ENCODE measurements at regions of chr11 and their contacts with region 1.

Region 1: DNA sequence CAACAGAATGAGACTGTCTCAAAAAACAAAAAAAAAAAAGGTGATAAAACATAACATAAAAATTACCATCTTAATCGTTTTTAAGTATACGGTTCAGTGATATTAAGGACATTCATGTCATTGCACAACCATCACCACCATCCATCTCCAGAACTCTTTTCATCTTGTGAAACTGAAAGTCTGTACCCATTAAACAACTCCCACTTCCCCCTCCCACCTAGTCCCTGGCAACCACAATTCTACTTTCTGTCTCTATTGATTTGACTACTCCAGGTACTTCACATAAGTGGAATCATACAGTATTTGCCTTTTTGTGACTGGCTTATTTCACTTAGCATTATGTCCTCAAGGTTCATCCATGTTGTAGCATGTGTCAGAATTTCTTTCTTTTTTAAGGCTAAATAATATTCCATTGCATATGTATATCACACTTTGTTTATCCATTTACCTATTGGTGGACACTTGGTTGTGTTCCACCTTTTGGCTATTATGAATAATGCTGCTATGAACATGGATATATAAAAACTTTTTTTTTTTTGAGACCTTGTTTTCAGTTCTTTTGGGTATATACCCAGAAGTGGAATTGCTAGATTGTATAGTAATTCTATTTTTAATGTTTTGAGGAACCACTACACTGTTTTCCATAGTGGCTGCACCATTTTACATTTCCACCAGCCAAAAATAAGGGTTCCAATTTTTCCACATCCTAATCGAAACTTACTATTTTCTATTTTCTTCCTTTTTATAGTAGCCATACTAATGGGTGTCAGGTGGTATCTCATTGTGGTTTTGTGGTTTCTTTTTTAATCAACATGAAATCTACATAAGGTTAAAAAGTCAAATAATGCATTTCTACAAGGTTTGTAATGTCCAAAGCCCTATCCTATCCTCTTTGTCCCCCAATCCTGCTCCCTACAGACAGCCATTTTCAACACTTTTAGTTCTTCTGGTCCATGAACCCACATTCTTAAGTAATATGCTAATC is 23.4 kb upstream of the PIK3C2A start:
- DNase-seq: peak in 4 of 5 donors; percentile 26 to 53 (median 39)
- H3K4me3 ChIP-seq: no peak overlapping the region
- H3K4me3 Mint-ChIP-seq: peak overlapping the region in 7 of 8 donors; percentile 0 to 77 (median 36)
- H3K27ac ChIP-seq: no peak overlapping the region
- H3K27ac Mint-ChIP-seq: peak overlapping the region in 2 of 7 donors; percentile 52 to 56
- H3K4me1 ChIP-seq: peaks cover 17% of the 10 kb centered on the region
- H3K4me1 Mint-ChIP-seq: peaks cover 9 to 19% (median 14%) of the 10 kb centered on the region in 4 donors
- H3K27me3 ChIP-seq: no peaks in the 10 kb centered on the region
- H3K27me3 Mint-ChIP-seq: peaks cover 0 to 1% of the 10 kb centered on the region in 2 donors

Region 2: DNA sequence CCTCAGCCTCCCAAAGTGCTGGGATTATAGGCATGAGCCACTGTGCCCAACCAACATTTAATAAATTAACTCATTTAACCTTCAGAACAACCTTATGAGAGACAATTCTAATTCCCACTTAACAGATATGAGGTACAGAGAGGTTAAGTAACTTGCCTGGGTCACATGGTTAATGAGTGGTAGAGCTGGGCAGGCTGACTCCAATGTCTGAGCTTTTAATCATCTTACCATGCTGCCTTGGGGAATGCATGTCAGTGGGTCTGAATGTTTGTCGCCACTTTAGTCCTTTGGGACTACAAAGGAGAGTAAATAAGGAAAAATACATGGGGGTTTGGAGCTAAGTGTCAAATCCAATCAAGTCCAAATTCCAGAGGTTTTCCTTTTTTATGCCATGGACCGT is 12.1 kb before region 1 on chr11:
- CTCF ChIA-PET with region 1: interaction called, 10 read pairs
- POLR2A ChIA-PET with region 1: no interaction called
- intact Hi-C with region 1: no loop called
- DNase-seq: no peak
- H3K4me3 ChIP-seq: no peak overlapping the region
- H3K4me3 Mint-ChIP-seq: no peak overlapping the region
- H3K27ac ChIP-seq: no peak overlapping the region
- H3K27ac Mint-ChIP-seq: no peak overlapping the region
- H3K4me1 ChIP-seq: no peaks in the 10 kb centered on the region
- H3K4me1 Mint-ChIP-seq: no peaks in the 10 kb centered on the region
- H3K27me3 ChIP-seq: no peaks in the 10 kb centered on the region
- H3K27me3 Mint-ChIP-seq: peaks cover 3 to 5% of the 10 kb centered on the region in 2 donors

Region 3: DNA sequence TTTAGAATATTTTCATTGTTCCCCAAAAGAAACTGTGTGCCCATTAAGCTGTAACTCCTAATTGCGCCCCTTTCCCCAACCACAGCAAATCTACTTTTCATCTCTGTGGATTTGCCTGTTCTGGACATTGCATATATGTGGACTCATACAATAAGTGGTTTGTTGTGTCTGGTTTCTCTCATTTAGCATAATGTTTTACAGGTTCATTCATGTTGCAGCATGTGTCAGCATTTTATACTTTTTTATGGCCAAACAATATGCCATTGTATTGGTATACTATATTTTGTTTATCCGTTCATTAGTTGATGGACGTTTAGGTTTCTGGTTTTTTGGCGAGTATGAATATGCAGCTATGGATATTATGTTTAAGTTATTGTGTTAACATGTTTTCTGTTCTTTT is 69.2 kb after region 1 on chr11:
- CTCF ChIA-PET with region 1: interaction called, 4 read pairs
- POLR2A ChIA-PET with region 1: no interaction called
- intact Hi-C with region 1: loop called (anchors 5 kb)
- DNase-seq: no peak
- H3K4me3 ChIP-seq: no peak overlapping the region
- H3K4me3 Mint-ChIP-seq: no peak overlapping the region
- H3K27ac ChIP-seq: no peak overlapping the region
- H3K27ac Mint-ChIP-seq: peak overlapping the region in 2 of 7 donors; percentile 8 to 23
- H3K4me1 ChIP-seq: no peaks in the 10 kb centered on the region
- H3K4me1 Mint-ChIP-seq: peaks cover 8 to 13% (median 12%) of the 10 kb centered on the region in 4 donors
- H3K27me3 ChIP-seq: no peaks in the 10 kb centered on the region
- H3K27me3 Mint-ChIP-seq: no peaks in the 10 kb centered on the region

Region 4: DNA sequence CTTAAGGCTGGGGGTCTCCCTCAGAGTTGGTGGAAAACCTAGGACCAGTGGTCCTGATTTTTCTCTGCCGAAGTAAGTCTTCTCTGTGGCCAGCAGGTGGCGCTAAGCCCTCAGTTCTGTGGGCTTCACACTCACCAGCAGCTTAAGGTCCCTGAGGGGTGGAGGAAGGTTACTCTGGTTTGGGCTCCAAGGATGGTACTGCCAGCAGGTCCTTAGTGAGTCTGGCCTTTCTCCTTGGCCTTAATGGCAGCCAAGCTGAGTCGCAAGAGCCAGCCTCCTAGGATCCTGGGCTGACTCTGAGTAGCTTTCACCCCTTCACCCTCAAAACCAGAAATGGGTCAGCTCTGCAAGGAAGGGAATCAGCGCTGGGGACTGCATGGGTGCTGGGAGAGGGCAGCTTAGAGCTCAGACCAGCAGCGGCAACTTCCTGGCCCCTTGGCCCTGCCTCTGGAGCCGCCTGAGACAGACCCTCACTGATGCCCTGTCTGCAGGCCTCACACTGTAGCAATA is 152.9 kb after region 1 on chr11:
- CTCF ChIA-PET with region 1: interaction called, 21 read pairs
- POLR2A ChIA-PET with region 1: no interaction called
- intact Hi-C with region 1: loop called (anchors 1 kb)
- DNase-seq: peak; percentile 67 to 70 (median 70)
- H3K4me3 ChIP-seq: no peak overlapping the region
- H3K4me3 Mint-ChIP-seq: no peak overlapping the region
- H3K27ac ChIP-seq: no peak overlapping the region
- H3K27ac Mint-ChIP-seq: peak overlapping the region in 1 of 7 donors; percentile 78
- H3K4me1 ChIP-seq: no peaks in the 10 kb centered on the region
- H3K4me1 Mint-ChIP-seq: no peaks in the 10 kb centered on the region
- H3K27me3 ChIP-seq: no peaks in the 10 kb centered on the region
- H3K27me3 Mint-ChIP-seq: no peaks in the 10 kb centered on the region

Region 5: DNA sequence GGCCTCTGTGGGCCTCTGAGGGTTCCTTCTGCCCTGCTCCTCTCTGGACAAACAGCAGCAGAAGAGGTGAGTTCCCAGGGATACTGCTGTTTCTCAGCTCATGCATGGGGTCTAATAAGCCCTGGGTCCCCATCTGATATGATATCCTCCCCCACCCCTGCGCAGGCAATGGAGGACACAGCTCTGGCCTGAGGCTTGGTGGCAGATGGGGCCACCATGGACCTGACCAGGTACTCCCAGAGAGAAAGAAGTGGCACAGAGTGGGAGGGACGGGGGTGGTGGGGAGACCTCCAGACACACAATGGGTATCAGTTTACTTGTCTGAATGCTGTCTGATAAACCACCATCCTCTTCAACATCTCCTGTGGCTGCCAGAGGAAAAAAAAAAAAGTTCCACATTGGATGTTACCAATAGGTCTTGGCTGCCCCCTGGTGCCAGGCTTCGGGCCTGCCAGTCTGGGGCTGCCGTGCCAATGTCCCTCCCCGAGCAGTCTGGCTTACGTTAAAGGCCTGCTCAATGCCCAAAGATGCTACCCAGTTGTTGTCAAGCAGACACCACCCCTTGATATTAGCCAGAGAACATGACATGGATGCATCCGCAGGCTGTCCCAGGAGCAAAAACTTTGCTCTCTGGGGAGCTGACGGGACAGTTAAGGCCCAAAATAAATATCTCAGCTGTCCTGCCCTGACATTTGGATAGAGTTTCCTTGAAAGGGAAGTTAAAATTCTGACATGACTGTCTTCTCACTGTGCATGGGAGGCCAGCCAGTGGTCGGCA is 273.4 kb after region 1 on chr11:
- CTCF ChIA-PET with region 1: interaction called, 47 read pairs
- POLR2A ChIA-PET with region 1: no interaction called
- intact Hi-C with region 1: loop called (anchors 1 kb)
- DNase-seq: peak; percentile 64 to 73 (median 71)
- H3K4me3 ChIP-seq: no peak overlapping the region
- H3K4me3 Mint-ChIP-seq: no peak overlapping the region
- H3K27ac ChIP-seq: no peak overlapping the region
- H3K27ac Mint-ChIP-seq: peak overlapping the region in 1 of 7 donors; percentile 47
- H3K4me1 ChIP-seq: no peaks in the 10 kb centered on the region
- H3K4me1 Mint-ChIP-seq: peaks cover 0 to 2% (median 0%) of the 10 kb centered on the region in 4 donors
- H3K27me3 ChIP-seq: no peaks in the 10 kb centered on the region
- H3K27me3 Mint-ChIP-seq: peaks cover 3 to 6% of the 10 kb centered on the region in 2 donors

Region 6: DNA sequence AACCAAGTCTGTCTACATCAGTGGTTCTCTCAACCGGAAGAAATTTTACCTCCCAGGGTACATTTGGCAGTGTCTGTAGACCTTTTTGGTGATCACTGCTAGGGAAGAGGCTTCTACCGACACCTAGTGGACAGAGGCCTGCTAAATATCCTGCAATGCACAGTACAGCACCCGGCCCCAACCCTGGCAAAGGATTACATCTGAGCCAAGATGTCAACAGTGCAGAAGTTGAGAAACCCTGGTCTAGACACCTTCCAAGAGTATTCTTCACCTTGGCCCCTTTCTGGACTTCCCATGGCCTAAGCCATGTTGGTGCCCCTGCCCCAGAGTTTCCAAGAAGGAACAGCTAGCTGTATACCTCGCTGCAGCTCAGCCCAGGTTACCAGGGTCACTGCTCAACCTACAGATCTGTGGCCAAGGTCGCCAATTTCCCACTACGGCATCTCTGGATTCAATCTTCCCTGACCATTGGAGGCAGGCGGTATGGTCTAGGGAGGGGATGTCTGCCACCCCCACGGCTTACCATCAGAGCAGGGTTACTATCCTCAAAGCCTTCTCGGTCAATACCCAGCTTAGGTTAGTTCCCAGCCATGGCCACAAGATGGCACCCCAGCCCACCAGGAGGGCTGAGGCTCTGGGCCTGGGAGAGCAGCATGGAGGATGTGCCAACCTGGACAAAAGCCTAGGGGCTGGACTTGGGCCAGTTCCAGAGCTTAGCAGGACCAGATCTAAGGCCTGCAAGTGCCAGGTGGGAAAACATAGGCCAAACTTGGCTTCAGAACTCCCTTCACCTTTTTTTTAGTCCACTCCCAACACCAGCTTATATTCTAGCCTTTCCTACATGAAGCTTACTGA is 499.7 kb after region 1 on chr11:
- CTCF ChIA-PET with region 1: no interaction called
- POLR2A ChIA-PET with region 1: no interaction called
- intact Hi-C with region 1: loop called (anchors 2 kb)
- DNase-seq: peak; percentile 23 to 42 (median 32)
- H3K4me3 ChIP-seq: no peak overlapping the region
- H3K4me3 Mint-ChIP-seq: no peak overlapping the region
- H3K27ac ChIP-seq: no peak overlapping the region
- H3K27ac Mint-ChIP-seq: no peak overlapping the region
- H3K4me1 ChIP-seq: no peaks in the 10 kb centered on the region
- H3K4me1 Mint-ChIP-seq: peaks cover 0 to 8% (median 5%) of the 10 kb centered on the region in 4 donors
- H3K27me3 ChIP-seq: peaks cover 13% of the 10 kb centered on the region
- H3K27me3 Mint-ChIP-seq: peaks cover 29 to 39% of the 10 kb centered on the region in 2 donors

Measured in CD4-positive, alpha-beta memory T cell (primary cell).